ENCODE measurements at regions of chr1 and their contacts with region 1.

Region 1: GRCh38 chr1:181142096-181142958 is 53.8 kb downstream of the IER5 start:
- DNase-seq: peak; percentile 91
- H3K4me3 ChIP-seq: no peak overlapping the region
- H3K27ac ChIP-seq: no peak overlapping the region
- H3K4me1 ChIP-seq: peaks cover 16% of the 10 kb centered on the region
- H3K27me3 ChIP-seq: no peaks in the 10 kb centered on the region
- CTCF ChIP-seq: peak; percentile 99

Region 2: DNA sequence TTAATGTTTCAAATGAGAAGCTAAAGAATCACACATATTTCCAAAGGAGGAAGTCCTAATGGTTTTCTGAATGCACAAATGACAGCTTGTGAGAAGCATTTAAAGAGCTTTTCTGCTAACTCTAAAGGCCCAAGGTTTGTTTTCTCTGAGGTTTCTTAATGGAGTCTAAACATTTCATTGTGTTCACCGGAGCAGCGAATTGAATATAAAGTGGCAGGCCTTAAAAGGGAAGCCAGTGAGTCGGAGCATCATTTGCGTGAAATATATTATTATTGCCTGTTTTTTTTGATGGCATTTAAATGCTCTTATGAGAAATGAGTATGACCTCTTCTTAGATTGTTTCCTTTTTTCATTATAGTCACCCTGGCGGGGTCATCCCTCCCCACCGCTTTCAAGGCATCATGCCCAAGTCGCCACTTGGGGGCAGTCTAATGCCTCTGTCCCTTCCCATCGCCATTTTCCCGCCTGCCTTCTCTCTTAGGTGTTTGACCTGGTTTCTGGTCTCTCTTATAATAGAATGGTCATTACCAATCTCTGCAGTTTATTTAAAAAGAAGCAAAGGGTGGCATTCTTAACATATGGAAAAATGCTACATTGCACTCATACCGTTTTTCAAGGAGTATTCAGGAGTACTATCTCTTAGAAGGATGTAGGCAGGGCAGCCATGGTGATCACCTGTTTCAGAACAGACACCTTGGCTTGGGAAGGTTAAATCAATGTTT is 608.9 kb before region 1 on chr1:
- CTCF ChIA-PET with region 1: no interaction called
- POLR2A ChIA-PET with region 1: no interaction called
- intact Hi-C with region 1: loop called (anchors 5 kb)
- DNase-seq: peak; percentile 71
- H3K4me3 ChIP-seq: no peak overlapping the region
- H3K27ac ChIP-seq: no peak overlapping the region
- H3K4me1 ChIP-seq: no peaks in the 10 kb centered on the region
- H3K27me3 ChIP-seq: no peaks in the 10 kb centered on the region
- CTCF ChIP-seq: peak; percentile 91

Region 3: GRCh38 chr1:180881806-180882509 is 260.4 kb before region 1 on chr1:
- CTCF ChIA-PET with region 1: interaction called, 39 read pairs
- POLR2A ChIA-PET with region 1: no interaction called
- intact Hi-C with region 1: loop called (anchors 1 kb)
- DNase-seq: peak; percentile 63
- H3K4me3 ChIP-seq: no peak overlapping the region
- H3K27ac ChIP-seq: no peak overlapping the region
- H3K4me1 ChIP-seq: no peaks in the 10 kb centered on the region
- H3K27me3 ChIP-seq: no peaks in the 10 kb centered on the region
- CTCF ChIP-seq: peak; percentile 55

Region 4: DNA sequence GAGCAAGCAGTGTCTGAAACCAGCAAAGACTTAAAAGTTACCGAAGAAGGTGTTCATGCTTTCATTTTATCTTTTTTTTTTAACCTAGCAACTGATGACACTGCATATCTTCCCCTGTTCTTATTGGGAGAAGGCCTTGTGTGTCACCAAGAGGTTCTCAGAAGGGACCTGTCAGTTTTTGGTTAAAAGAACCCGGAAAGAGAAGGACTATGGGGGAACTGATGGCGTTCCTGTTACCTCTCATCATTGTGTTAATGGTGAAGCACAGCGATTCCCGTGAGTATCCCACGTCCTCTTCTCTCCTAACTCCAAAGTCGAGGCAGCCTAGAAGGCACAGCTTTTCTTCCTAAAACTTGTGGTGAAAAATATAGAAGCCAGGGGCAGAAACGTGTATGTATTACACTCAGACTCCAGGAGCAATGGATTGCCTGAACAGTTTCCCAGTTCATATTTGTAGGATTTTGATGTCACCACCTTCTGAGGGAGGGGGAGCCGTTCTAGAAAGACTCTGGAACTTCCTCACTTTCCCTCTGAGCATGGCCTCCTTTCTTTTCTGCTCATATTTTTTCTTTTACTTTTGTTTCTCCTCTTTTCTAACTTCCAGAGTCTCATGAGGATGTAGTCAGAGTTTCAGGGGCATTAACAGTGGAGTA is 108.4 kb before region 1 on chr1 and contains the start of gene MR1:
- CTCF ChIA-PET with region 1: interaction called, 35 read pairs
- POLR2A ChIA-PET with region 1: no interaction called
- intact Hi-C with region 1: loop called (anchors 1 kb)
- DNase-seq: peak; percentile 90
- H3K4me3 ChIP-seq: peak within 1 kb of the TSS; percentile 43
- H3K27ac ChIP-seq: peak within 1 kb of the TSS; percentile 59
- H3K4me1 ChIP-seq: peaks cover 4% of the 10 kb centered on the region
- H3K27me3 ChIP-seq: no peaks in the 10 kb centered on the region
- CTCF ChIP-seq: no peak
- total RNA-seq, gene MR1: 2.6 and 2.8 TPM in 2 replicates

Region 5: DNA sequence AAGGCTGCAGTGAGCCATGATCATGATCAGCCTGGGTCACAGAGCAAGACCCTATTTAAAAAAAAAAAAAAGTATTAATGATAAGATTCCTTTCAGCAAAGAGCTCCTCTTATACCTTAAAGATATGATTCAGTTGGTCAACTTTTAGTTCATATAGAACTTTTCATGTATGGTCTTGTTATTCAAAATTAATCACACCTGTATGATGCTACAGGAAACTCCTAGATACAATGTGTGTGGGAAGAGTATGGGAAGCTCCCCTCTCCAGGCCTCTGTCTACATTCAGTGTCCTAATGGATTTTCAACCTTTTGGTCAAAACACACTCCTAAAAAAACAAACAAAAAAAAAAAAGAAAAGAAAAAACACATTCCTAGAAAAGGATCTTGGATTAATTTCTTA is 91.4 kb before region 1 on chr1:
- CTCF ChIA-PET with region 1: no interaction called
- POLR2A ChIA-PET with region 1: no interaction called
- intact Hi-C with region 1: no loop called
- DNase-seq: no peak
- H3K4me3 ChIP-seq: no peak overlapping the region
- H3K27ac ChIP-seq: no peak overlapping the region
- H3K4me1 ChIP-seq: no peaks in the 10 kb centered on the region
- H3K27me3 ChIP-seq: no peaks in the 10 kb centered on the region
- CTCF ChIP-seq: no peak

Region 6: GRCh38 chr1:181088079-181089016 is 54.0 kb before region 1 on chr1 and contains the start of gene IER5:
- CTCF ChIA-PET with region 1: interaction called, 19 read pairs
- POLR2A ChIA-PET with region 1: no interaction called
- intact Hi-C with region 1: loop called (anchors 1 kb)
- DNase-seq: peak; percentile 98
- H3K4me3 ChIP-seq: peak within 1 kb of the TSS; percentile 90
- H3K27ac ChIP-seq: peak within 1 kb of the TSS; percentile 76
- H3K4me1 ChIP-seq: peaks cover 32% of the 10 kb centered on the region
- H3K27me3 ChIP-seq: no peaks in the 10 kb centered on the region
- CTCF ChIP-seq: no peak
- total RNA-seq, gene IER5: 25.5 and 28.2 TPM in 2 replicates

Region 7: DNA sequence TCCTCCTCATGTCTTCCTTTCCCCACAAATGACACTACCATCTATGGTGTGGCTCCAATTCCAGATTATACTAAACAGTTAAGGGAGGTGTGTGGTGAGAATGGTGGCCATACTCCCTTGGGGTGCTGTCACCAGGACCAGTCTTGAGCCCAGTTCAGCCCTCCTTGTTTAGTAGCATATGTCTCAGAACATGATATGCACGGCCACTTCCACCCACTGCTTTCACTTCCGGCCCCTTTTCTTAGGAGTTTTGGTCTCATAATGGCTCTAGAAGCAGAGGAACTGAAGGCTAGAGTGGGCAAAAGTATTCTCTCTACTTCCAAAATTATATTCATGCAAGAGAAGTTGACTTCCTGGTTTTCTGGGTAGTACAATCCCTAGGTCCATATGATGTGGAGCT is 295.7 kb after region 1 on chr1:
- CTCF ChIA-PET with region 1: no interaction called
- POLR2A ChIA-PET with region 1: no interaction called
- intact Hi-C with region 1: no loop called
- DNase-seq: no peak
- H3K4me3 ChIP-seq: no peak overlapping the region
- H3K27ac ChIP-seq: no peak overlapping the region
- H3K4me1 ChIP-seq: no peaks in the 10 kb centered on the region
- H3K27me3 ChIP-seq: peaks cover 49% of the 10 kb centered on the region
- CTCF ChIP-seq: no peak